Activated B cell treated with CpG ODN at 0.5 μM for 24 hours (primary cell): ENCODE measurements at regions of chr9 and their contacts with region 1.

Region 1: GRCh38 chr9:109012876-109013678 is at the start of gene CTNNAL1:
- DNase-seq: peak; percentile 88
- ATAC-seq: peak; percentile 96
- H3K4me3 Mint-ChIP-seq: peak within 1 kb of the TSS; percentile 92
- H3K27ac Mint-ChIP-seq: peak within 1 kb of the TSS; percentile 72
- H3K4me1 Mint-ChIP-seq: peaks cover 38% of the 10 kb centered on the region
- H3K27me3 Mint-ChIP-seq: peaks cover 9% of the 10 kb centered on the region
- CTCF ChIP-seq: no peak
- total RNA-seq, gene CTNNAL1: 1.9 and 2.4 TPM in 2 replicates

Region 2: DNA sequence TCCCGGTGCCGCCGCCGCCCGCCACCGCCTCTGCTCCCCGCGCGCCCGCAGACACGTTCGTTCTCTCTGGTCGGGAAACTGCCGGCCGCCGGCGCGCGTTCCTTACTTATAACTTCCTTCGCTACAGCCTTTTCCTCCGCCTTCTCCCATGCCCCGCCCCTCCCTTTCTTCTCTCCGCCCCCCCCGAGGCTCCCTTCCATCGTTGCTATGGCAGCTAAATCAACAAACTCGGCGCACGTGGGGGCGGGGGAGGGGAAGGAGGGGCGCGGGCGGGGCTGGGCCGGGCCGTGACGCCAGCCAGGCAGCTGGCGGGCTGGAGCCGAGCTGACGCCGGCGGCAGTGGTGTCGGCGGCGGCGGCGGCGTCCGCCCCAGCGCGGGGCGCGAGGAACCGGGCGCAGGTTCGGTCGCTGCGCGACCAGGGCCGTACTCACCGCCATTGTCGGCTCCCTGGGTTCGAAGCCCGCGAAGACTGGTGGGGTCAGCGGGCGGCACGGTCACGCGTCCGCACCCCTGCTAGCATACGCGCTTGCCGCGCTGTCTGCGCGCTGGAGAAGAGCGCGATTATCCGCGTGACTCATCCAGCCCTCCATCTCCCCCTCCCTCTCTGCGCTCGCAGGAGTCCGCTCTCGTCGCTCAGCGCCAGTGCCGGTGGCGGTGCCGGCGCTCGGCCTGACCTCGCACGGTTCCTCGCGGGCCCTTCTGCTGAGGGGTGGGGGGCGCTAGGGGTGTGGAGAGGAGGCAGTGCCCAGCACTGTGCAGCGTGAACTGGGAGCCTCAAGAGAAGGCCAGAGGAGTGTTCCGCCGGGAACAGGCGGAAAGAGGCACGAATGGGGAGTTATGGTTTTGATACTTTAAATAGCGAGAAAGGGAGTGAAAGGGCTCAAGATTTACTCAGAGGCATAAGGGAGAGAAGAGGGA is 1523.1 kb before region 1 on chr9 and contains the start of gene KLF4:
- CTCF ChIA-PET with region 1: no interaction called
- POLR2A ChIA-PET with region 1: no interaction called
- intact Hi-C with region 1: loop called (anchors 10 kb)
- DNase-seq: peak; percentile 68
- ATAC-seq: peak; percentile 73
- H3K4me3 Mint-ChIP-seq: peak within 1 kb of the TSS; percentile 78
- H3K27ac Mint-ChIP-seq: no peak within 1 kb of the TSS
- H3K4me1 Mint-ChIP-seq: peaks cover 28% of the 10 kb centered on the region
- H3K27me3 Mint-ChIP-seq: peaks cover 46% of the 10 kb centered on the region
- CTCF ChIP-seq: no peak
- total RNA-seq, gene KLF4: 1.0 TPM in 2 replicates

Region 3: GRCh38 chr9:108933718-108934322 is 79.3 kb before region 1 on chr9 and contains the start of gene ELP1:
- CTCF ChIA-PET with region 1: no interaction called
- POLR2A ChIA-PET with region 1: no interaction called
- intact Hi-C with region 1: loop called (anchors 1 kb)
- DNase-seq: peak; percentile 86
- ATAC-seq: peak; percentile 83
- H3K4me3 Mint-ChIP-seq: peak within 1 kb of the TSS; percentile 97
- H3K27ac Mint-ChIP-seq: peak within 1 kb of the TSS; percentile 89
- H3K4me1 Mint-ChIP-seq: peaks cover 23% of the 10 kb centered on the region
- H3K27me3 Mint-ChIP-seq: no peaks in the 10 kb centered on the region
- CTCF ChIP-seq: no peak
- total RNA-seq, gene ELP1: 20.3 and 25.0 TPM in 2 replicates

Region 4: DNA sequence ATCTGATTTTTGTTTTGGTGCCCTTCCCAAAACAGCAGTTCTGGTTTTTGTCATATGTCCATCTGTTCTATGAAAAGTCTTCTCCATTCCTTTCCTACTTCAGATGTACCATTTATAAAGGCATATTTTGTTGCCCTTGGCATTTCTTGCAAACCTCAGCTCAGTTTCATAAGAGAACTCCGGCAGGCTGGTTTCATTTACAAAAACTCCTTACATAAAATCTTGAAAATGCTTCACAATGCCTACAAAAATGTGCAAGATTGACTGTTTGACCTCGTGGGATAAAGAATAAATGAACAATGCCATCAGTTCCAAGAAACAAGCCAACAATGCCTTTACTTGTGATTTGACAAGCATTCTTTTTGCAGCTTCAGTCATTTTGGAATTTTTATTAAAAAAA is 39.3 kb after region 1 on chr9:
- CTCF ChIA-PET with region 1: no interaction called
- POLR2A ChIA-PET with region 1: interaction called, 11 read pairs
- intact Hi-C with region 1: no loop called
- DNase-seq: no peak
- ATAC-seq: no peak
- H3K4me3 Mint-ChIP-seq: no peak overlapping the region
- H3K27ac Mint-ChIP-seq: no peak overlapping the region
- H3K4me1 Mint-ChIP-seq: no peaks in the 10 kb centered on the region
- H3K27me3 Mint-ChIP-seq: no peaks in the 10 kb centered on the region
- CTCF ChIP-seq: no peak

Region 5: GRCh38 chr9:109119439-109120203 is 106.5 kb after region 1 on chr9 and contains the start of gene TMEM245:
- CTCF ChIA-PET with region 1: no interaction called
- POLR2A ChIA-PET with region 1: interaction called, 4 read pairs
- intact Hi-C with region 1: loop called (anchors 1 kb)
- DNase-seq: peak; percentile 86
- ATAC-seq: peak; percentile 95
- H3K4me3 Mint-ChIP-seq: peak within 1 kb of the TSS; percentile 88
- H3K27ac Mint-ChIP-seq: peak within 1 kb of the TSS; percentile 82
- H3K4me1 Mint-ChIP-seq: peaks cover 36% of the 10 kb centered on the region
- H3K27me3 Mint-ChIP-seq: no peaks in the 10 kb centered on the region
- CTCF ChIP-seq: no peak
- total RNA-seq, gene TMEM245: 16.1 and 20.6 TPM in 2 replicates